B cell (primary cell): ENCODE measurements at regions of chr2 and their contacts with region 1.

Region 1: DNA sequence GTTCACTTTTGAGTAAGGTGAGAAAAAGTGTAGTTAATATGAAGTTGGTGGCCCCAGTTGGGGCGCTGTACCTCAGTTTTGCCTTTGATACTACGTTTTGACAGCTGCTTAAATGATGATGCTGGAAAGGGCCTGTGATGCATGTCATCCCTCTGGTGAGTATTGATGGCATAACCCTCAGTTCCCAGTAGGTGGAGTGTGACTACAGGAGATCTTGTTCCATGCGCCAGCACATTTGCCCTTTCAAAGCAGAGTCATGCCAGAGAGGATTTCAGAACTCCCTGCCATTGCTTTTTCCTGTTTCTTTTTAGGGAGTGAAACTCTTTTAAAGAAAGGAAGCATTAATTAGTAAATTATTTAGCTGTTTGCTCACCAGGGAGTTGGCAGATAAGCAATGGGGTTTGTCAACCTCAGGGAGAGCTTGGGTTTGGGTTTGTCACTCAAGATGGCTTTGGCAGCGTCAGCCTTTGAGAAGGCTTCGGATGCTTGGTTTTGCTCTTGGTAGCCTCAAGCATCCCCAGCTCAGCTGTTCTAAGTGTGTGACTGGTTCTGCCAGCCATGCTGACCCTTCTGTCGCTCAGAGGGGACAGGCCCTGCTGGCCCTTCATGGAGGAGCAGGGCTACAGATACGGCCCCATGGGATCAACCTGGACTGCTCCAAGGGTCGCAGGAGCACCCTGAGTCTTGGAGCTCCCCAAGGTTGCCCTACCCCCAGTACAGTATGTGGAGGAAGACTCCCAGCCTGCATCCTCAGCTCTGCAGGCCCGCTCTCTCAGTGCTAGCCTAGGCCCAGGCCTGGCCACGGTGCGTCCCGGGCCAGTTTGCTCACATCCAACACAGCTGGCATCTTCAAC is 29.1 kb downstream of the ARMC9 start:
- DNase-seq: peak; percentile 80
- ATAC-seq: peak; percentile 77
- H3K4me3 ChIP-seq: no peak overlapping the region
- H3K4me3 Mint-ChIP-seq: no peak overlapping the region
- H3K27ac ChIP-seq: no peak overlapping the region
- H3K27ac Mint-ChIP-seq: peak overlapping the region; percentile 69
- H3K4me1 ChIP-seq: peaks cover 18 to 22% of the 10 kb centered on the region in 2 donors
- H3K4me1 Mint-ChIP-seq: peaks cover 23% of the 10 kb centered on the region
- H3K27me3 ChIP-seq: no peaks in the 10 kb centered on the region
- H3K27me3 Mint-ChIP-seq: no peaks in the 10 kb centered on the region
- CTCF ChIP-seq: peak; percentile 85

Region 2: DNA sequence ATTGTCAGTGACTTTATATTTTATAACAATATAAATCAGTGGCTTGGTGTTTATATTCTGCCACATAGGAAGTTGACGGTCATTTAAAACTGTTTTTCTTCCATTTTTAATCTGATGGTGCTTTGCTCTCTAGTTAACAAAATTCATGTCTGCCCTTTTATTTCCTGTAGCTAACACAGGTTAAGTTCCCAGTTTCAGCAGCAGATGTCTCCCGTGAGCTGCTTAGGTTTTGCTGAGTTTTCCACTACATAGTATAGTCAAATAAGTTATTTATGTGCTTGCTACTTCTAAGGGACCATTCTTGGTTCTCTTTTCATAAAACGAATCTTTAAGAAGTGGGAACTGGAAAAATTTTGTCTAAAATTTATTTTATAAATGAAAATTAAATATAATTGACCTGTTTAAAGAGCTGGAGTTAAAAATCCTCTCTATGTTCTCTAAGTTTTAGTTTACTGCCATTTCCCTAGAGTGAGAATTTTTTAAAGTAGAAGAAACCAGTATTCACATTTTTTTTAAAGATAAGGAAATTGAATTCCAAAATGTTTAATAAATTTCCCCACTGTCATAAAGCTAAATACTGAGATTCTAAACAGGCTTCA is 123.3 kb before region 1 on chr2:
- CTCF ChIA-PET with region 1: interaction called, 32 read pairs
- POLR2A ChIA-PET with region 1: no interaction called
- intact Hi-C with region 1: loop called (anchors 1 kb)
- DNase-seq: peak; percentile 73
- ATAC-seq: peak; percentile 69
- H3K4me3 ChIP-seq: no peak overlapping the region
- H3K4me3 Mint-ChIP-seq: no peak overlapping the region
- H3K27ac ChIP-seq: no peak overlapping the region
- H3K27ac Mint-ChIP-seq: no peak overlapping the region
- H3K4me1 ChIP-seq: no peaks in the 10 kb centered on the region
- H3K4me1 Mint-ChIP-seq: no peaks in the 10 kb centered on the region
- H3K27me3 ChIP-seq: no peaks in the 10 kb centered on the region
- H3K27me3 Mint-ChIP-seq: no peaks in the 10 kb centered on the region
- CTCF ChIP-seq: peak; percentile 87

Region 3: GRCh38 chr2:231238689-231239088 is 11.2 kb after region 1 on chr2:
- CTCF ChIA-PET with region 1: interaction called, 13 read pairs
- POLR2A ChIA-PET with region 1: no interaction called
- intact Hi-C with region 1: no loop called
- DNase-seq: no peak
- ATAC-seq: no peak
- H3K4me3 ChIP-seq: no peak overlapping the region
- H3K4me3 Mint-ChIP-seq: no peak overlapping the region
- H3K27ac ChIP-seq: no peak overlapping the region
- H3K27ac Mint-ChIP-seq: no peak overlapping the region
- H3K4me1 ChIP-seq: no peaks in the 10 kb centered on the region
- H3K4me1 Mint-ChIP-seq: no peaks in the 10 kb centered on the region
- H3K27me3 ChIP-seq: no peaks in the 10 kb centered on the region
- H3K27me3 Mint-ChIP-seq: no peaks in the 10 kb centered on the region
- CTCF ChIP-seq: no peak

Region 4: GRCh38 chr2:231245253-231246094 is 17.9 kb after region 1 on chr2:
- CTCF ChIA-PET with region 1: interaction called, 10 read pairs
- POLR2A ChIA-PET with region 1: no interaction called
- intact Hi-C with region 1: no loop called
- DNase-seq: peak; percentile 61
- ATAC-seq: peak; percentile 68
- H3K4me3 ChIP-seq: no peak overlapping the region
- H3K4me3 Mint-ChIP-seq: no peak overlapping the region
- H3K27ac ChIP-seq: no peak overlapping the region
- H3K27ac Mint-ChIP-seq: no peak overlapping the region
- H3K4me1 ChIP-seq: no peaks in the 10 kb centered on the region
- H3K4me1 Mint-ChIP-seq: no peaks in the 10 kb centered on the region
- H3K27me3 ChIP-seq: no peaks in the 10 kb centered on the region
- H3K27me3 Mint-ChIP-seq: no peaks in the 10 kb centered on the region
- CTCF ChIP-seq: peak; percentile 54

Region 5: DNA sequence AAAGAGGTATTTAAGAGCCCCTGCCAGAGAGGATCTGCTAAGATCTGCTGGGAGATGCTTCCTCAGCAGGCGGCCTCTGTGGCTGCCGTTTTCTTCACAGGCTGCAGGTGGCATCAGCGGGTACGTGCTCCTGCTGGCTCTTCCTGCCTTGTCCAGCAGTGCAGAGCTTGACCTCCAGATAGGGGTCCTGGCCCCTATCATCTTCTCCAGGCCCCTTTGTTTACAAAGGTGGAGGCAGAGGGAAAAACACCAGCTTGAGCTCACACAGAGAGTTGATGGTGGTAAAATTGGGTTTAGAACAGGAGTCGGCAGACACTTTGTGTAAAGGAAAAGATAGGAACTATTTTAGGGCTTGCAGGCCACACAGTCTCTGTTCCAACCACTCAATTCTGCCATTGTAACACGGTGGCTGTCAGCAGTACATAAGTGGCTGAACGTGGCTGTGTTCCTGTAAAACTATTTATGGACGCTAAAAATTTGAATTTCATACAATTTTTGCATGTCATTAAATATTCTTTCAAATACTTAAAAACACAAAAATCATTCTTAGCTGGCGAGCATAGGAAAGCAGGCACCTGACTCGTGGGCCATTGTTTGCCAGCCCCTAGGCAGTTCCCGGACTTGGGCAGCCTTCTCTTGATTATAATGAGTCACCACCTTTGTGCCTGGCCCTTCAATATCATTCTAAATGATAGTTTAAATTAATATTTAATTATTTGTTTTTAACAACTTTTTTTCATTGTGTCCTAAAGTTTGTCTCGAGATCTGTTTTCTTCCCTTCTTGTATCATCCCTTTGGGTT is 69.8 kb after region 1 on chr2:
- CTCF ChIA-PET with region 1: interaction called, 23 read pairs
- POLR2A ChIA-PET with region 1: no interaction called
- intact Hi-C with region 1: loop called (anchors 2 kb)
- DNase-seq: peak; percentile 68
- ATAC-seq: peak; percentile 62
- H3K4me3 ChIP-seq: no peak overlapping the region
- H3K4me3 Mint-ChIP-seq: no peak overlapping the region
- H3K27ac ChIP-seq: no peak overlapping the region
- H3K27ac Mint-ChIP-seq: no peak overlapping the region
- H3K4me1 ChIP-seq: peaks cover 30 to 56% of the 10 kb centered on the region in 2 donors
- H3K4me1 Mint-ChIP-seq: peaks cover 56% of the 10 kb centered on the region
- H3K27me3 ChIP-seq: no peaks in the 10 kb centered on the region
- H3K27me3 Mint-ChIP-seq: no peaks in the 10 kb centered on the region
- CTCF ChIP-seq: peak; percentile 76

Region 6: DNA sequence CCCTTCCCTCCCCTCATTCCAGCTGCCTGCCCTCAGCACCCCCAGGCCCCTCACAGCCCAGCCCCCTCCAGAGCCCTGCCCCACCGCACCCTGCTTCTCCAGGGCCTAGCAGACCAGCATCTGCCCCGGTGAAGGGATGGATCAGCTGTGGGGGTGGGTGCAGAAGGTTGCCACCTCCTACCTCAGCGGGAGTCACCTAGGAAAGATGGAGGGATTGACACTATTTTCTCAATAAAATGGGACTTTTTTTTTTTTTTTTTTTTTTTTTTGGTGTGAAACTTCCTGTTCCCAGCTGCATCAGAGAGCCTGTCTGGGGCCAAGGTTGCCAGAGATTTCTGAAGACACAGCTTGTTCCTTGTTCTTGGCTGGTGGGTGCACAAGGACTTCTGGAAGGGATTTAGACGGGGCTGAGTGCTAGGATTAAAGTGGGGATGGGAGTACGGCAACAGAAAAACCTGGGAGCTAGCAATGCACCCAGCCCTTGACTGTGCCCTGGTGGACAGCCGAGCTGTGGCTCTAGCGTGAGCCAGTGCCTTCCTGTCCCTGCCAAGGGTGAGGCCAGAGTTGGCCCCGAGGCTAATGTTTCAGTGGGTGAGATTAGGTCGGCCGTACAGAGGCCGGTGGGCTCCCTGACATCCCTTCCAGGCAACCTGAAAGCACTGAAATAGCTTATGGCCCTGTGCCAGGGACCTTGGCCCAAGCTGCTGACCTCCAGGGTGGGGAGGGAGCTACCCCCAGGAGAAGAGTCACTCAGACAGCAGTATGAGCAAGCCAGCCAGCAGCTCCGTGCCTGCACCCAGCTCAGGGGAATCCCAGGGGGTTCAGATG is 172.5 kb after region 1 on chr2:
- CTCF ChIA-PET with region 1: interaction called, 325 read pairs
- POLR2A ChIA-PET with region 1: interaction called, 4 read pairs
- intact Hi-C with region 1: loop called (anchors 1 kb)
- DNase-seq: no peak
- ATAC-seq: no peak
- H3K4me3 ChIP-seq: no peak overlapping the region
- H3K4me3 Mint-ChIP-seq: no peak overlapping the region
- H3K27ac ChIP-seq: no peak overlapping the region
- H3K27ac Mint-ChIP-seq: peak overlapping the region; percentile 56
- H3K4me1 ChIP-seq: peaks cover 7 to 13% of the 10 kb centered on the region in 2 donors
- H3K4me1 Mint-ChIP-seq: peaks cover 27% of the 10 kb centered on the region
- H3K27me3 ChIP-seq: no peaks in the 10 kb centered on the region
- H3K27me3 Mint-ChIP-seq: no peaks in the 10 kb centered on the region
- CTCF ChIP-seq: no peak

Region 7: GRCh38 chr2:231411831-231412617 is 184.5 kb after region 1 on chr2:
- CTCF ChIA-PET with region 1: interaction called, 325 read pairs
- POLR2A ChIA-PET with region 1: interaction called, 3 read pairs
- intact Hi-C with region 1: loop called (anchors 1 kb)
- DNase-seq: peak; percentile 88
- ATAC-seq: peak; percentile 100
- H3K4me3 ChIP-seq: peak overlapping the region in 4 of 5 experiments; percentile 10 to 62 (median 52)
- H3K4me3 Mint-ChIP-seq: peak overlapping the region; percentile 80
- H3K27ac ChIP-seq: no peak overlapping the region
- H3K27ac Mint-ChIP-seq: no peak overlapping the region
- H3K4me1 ChIP-seq: peaks cover 12 to 13% of the 10 kb centered on the region in 2 donors
- H3K4me1 Mint-ChIP-seq: peaks cover 7% of the 10 kb centered on the region
- H3K27me3 ChIP-seq: peaks cover 0 to 24% (median 10%) of the 10 kb centered on the region in 4 experiments
- H3K27me3 Mint-ChIP-seq: peaks cover 21% of the 10 kb centered on the region
- CTCF ChIP-seq: peak; percentile 87

Region 8: DNA sequence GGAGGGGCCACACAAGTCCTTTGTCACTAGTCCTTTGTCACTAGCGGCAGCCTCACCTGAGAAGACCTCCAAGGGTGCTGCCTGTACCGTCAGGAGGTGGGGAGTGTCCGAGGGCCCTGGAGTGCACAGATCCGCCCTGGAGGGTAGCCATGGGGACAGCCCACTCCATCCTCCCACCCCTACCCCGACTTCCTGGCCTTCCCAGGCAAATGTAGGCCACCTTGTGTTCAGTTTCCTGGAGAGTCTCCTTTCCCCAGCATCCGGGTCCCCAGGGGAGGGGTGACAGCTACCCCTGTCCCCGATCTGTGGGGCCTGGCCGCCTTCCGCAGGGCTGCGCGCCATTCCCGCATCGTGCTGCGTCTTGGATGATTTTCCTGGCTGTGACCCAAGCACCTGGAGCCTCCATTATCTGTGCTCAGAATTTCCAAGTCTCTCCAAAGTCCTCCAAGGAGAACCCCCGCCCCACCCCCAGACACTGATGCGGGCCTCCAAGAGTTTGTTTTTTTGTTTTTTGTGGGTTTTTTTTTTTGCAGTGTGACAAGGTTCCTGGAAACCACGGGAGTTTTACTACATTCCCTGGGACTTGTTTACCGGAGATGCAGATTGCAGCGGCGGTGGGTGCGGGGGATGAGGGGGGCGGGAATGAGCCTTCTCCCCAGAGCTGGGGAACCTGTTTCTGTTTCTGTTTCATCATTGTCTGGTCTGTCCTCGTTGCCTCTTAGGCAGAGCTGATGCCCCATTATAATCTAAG is 393.8 kb after region 1 on chr2:
- CTCF ChIA-PET with region 1: no interaction called
- POLR2A ChIA-PET with region 1: no interaction called
- intact Hi-C with region 1: no loop called
- DNase-seq: no peak
- ATAC-seq: no peak
- H3K4me3 ChIP-seq: no peak overlapping the region
- H3K4me3 Mint-ChIP-seq: no peak overlapping the region
- H3K27ac ChIP-seq: no peak overlapping the region
- H3K27ac Mint-ChIP-seq: peak overlapping the region; percentile 37
- H3K4me1 ChIP-seq: no peaks in the 10 kb centered on the region
- H3K4me1 Mint-ChIP-seq: peaks cover 3% of the 10 kb centered on the region
- H3K27me3 ChIP-seq: peaks cover 0 to 3% (median 1%) of the 10 kb centered on the region in 4 experiments
- H3K27me3 Mint-ChIP-seq: no peaks in the 10 kb centered on the region
- CTCF ChIP-seq: no peak